ENCODE measurements at regions of chr20 and their contacts with region 1.

Region 1: GRCh38 chr20:37192137-37192854 is 12.9 kb upstream of the MROH8 start:
- DNase-seq: peak; percentile 44
- H3K4me3 ChIP-seq: no peak overlapping the region
- H3K27me3 ChIP-seq: no peaks in the 10 kb centered on the region
- CTCF ChIP-seq: peak; percentile 95

Region 2: DNA sequence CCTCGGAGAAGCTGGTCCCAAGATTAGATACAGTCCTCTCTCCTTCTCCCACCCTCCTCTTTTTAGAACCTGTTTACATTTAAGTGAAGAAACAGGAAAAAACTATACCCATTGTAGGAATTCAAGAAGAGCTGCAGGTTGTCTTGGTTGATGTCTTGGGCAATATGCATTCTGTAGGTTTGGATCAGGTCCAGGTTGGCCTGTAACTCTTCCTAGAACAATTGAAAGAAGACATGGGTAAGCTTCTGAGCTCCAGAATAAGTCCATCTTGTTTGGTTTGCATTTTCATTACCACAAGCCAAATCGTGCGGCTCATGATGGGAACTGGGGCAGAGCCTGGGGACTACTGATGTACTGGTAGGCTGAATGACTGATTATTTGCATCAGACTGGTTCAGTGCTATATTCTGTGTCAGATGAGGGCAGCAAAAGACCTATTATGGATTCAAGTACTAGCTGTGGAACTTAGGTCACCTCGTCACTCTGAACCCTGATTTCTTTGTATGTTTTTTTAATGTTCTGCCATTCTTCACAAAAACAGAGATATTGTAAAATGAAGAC is 526.0 kb before region 1 on chr20:
- CTCF ChIA-PET with region 1: no interaction called
- POLR2A ChIA-PET with region 1: no interaction called
- DNase-seq: no peak
- H3K4me3 ChIP-seq: no peak overlapping the region
- H3K27me3 ChIP-seq: no peaks in the 10 kb centered on the region
- CTCF ChIP-seq: no peak

Region 3: GRCh38 chr20:37178839-37179670 is 13.2 kb before region 1 on chr20 and contains the starts of genes MROH8 and RPN2:
- CTCF ChIA-PET with region 1: interaction called, 23 read pairs
- POLR2A ChIA-PET with region 1: no interaction called
- DNase-seq: peak; percentile 83
- H3K4me3 ChIP-seq: peak within 1 kb of the TSS; percentile 61
- H3K27me3 ChIP-seq: no peaks in the 10 kb centered on the region
- CTCF ChIP-seq: no peak
- polyA plus RNA-seq, gene MROH8: 2.4 and 2.7 TPM in 2 replicates
- polyA plus RNA-seq, gene RPN2: 647 and 834 TPM in 2 replicates

Region 4: DNA sequence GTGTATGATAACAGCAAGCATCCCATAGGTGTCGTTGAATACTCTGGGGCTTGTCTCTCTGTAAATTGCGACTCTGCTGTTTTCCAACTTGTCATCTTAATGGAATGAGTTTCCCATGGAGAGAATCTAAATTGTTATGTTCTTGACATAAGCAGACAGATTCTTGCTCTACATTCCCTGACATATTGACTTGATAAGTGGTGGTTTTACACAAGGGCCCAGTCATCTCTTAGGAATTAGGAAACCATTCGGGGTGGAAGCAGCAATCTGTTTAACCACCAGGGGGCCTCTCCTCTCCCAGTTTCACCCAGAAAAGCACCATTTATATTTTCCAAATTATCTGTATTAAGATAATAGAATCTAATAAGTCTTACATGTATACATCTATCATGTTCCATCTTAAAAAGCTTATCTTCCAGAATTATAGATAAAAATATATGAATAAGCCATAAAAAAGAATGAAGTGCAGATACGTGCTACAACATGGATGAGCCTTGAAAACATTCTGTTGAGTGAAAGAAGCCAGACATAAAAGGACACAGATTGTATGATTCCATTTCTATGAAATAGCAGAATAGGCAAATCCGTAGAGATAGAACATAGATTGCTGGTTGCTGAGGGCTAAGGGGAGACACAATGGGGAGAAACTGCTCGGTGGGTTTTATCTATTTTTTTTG is 10.1 kb after region 1 on chr20:
- CTCF ChIA-PET with region 1: interaction called, 10 read pairs
- POLR2A ChIA-PET with region 1: no interaction called
- DNase-seq: peak; percentile 92
- H3K4me3 ChIP-seq: peak overlapping the region; percentile 26
- H3K27me3 ChIP-seq: no peaks in the 10 kb centered on the region
- CTCF ChIP-seq: peak; percentile 83

Region 5: DNA sequence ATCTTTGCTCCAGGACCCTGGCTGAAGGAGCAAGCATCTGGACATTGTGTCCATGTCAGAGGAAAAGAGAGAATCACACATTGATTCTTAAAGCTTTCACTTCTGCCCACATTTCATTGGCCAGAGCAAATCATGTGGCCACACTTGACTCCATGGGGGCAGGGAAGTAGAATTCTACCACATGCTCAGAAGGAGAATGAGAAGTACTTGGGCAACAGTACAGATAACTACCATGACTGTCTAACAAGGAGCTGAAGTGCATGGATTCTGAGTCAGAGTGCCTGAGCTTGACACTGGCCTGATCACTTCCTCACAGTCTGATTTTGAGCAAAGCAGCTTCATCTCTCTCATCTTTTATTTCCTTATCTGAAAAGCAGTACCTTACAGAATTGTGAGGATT is 30.8 kb after region 1 on chr20:
- CTCF ChIA-PET with region 1: interaction called, 11 read pairs
- POLR2A ChIA-PET with region 1: interaction called, 3 read pairs
- DNase-seq: peak; percentile 47
- H3K4me3 ChIP-seq: no peak overlapping the region
- H3K27me3 ChIP-seq: no peaks in the 10 kb centered on the region
- CTCF ChIP-seq: no peak

Region 6: GRCh38 chr20:37270576-37271420 is 78.5 kb after region 1 on chr20:
- CTCF ChIA-PET with region 1: interaction called, 13 read pairs
- POLR2A ChIA-PET with region 1: no interaction called
- DNase-seq: no peak
- H3K4me3 ChIP-seq: no peak overlapping the region
- H3K27me3 ChIP-seq: 0 out of 2 replicates have a peak, but pooled peaks cover 2% of the 10 kb centered on the region
- CTCF ChIP-seq: no peak

Region 7: DNA sequence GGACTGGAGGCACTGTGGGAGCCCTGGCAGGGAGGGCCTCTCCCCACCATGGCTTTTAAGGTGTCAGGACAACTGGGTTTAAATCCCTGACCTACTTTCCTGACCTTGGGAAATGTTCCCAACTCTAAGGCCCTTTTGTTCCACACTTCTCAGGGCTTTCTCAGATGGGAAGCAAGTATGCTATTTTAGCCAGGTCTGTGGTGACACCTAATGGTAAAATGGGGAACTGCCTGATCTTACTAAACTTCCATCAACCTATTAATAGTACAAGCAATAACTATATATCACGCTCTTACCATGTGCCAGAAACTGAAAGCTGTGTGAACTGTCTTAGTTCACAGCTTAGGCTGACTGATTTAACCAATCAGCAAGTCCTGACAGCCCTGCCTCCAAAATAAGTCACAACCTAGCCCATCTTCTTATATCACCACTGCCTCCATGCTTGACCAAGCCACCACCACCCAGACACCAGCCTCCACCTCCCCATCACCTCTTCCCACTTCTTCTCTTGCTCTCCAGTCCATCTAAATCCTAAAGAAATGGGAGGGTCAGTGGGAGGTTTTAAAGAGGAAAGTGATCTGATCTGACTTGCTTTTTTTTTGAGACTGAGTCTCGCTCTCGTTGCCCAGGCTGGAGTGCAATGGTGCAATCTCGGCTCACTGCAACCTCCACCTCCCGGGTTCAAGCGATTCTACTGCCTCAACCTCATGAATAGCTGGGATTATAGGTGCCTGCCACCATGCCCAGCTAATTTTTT is 342.3 kb after region 1 on chr20:
- CTCF ChIA-PET with region 1: interaction called, 33 read pairs
- POLR2A ChIA-PET with region 1: no interaction called
- DNase-seq: no peak
- H3K4me3 ChIP-seq: no peak overlapping the region
- H3K27me3 ChIP-seq: peaks cover 2% of the 10 kb centered on the region; the same call in 1 of the 2 replicates
- CTCF ChIP-seq: peak; percentile 76

Measured in BJ (cell line).